CD14-positive monocyte (primary cell): ENCODE measurements at regions of chr14 and their contacts with region 1.

Region 1: GRCh38 chr14:61475316-61475715 is 153.9 kb downstream of the PRKCH start:
- DNase-seq: peak; percentile 73 to 82 (median 79)
- H3K4me3 ChIP-seq: no peak overlapping the region
- H3K4me3 Mint-ChIP-seq: peak overlapping the region in 1 of 2 donors; percentile 48
- H3K27ac ChIP-seq: peak overlapping the region in 1 of 2 donors; percentile 96
- H3K27ac Mint-ChIP-seq: peak overlapping the region; percentile 82 to 99 (median 98)
- H3K4me1 ChIP-seq: peaks cover 95 to 99% of the 10 kb centered on the region in 2 donors
- H3K4me1 Mint-ChIP-seq: peaks cover 95% of the 10 kb centered on the region
- H3K27me3 ChIP-seq: no peaks in the 10 kb centered on the region
- H3K27me3 Mint-ChIP-seq: peaks cover 0 to 3% (median 0%) of the 10 kb centered on the region in 3 donors
- CTCF ChIP-seq: peak; percentile 94

Region 2: DNA sequence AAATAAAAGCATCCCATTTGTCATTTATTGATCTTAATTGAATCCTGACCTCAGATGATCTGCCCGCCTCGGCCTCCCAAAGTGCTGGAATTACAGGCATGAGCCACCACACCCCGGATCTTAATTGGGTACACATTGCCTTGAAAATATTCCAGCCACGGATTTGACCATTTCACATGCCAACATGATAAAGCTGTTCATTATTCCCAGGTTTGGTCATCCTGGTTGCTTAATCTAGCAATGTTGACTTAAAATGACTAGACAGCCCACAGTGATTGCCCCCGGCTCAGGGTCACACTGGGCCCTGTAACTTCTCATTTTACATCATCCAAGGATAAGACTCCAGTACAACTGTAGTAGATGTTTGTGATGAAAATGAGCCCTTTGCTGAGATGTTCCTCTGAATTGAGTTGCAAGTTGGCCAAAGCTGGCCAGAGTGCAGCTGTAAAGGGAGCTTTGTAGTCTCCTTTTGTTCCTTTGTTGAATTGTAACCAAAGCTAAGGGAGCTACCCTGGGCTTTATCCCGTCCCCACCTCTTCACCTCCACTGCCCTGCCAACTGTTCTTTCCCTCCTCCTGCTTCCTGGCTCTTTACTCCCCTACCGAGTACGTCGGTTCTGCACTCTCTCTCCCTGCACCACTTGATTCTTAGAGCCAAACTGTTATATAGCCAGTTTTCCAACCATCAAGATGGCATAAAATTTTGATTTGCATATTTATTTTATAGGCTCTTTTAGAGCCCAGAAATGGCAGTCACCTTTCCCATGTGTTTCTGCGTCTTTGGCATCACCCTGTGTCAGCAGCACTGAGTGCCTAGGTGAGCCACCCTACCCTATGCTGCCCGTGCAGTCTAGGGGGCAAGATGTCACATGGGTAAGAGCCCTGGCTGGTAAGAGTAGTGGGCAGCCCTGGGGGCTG is 78.7 kb after region 1 on chr14:
- intact Hi-C with region 1: loop called in 1 of 2 experiments (anchors 5 kb)
- DNase-seq: peak; percentile 80 to 93 (median 90)
- H3K4me3 ChIP-seq: peak overlapping the region in 1 of 3 experiments; percentile 3
- H3K4me3 Mint-ChIP-seq: peak overlapping the region; percentile 55 to 59
- H3K27ac ChIP-seq: peak overlapping the region; percentile 92 to 94
- H3K27ac Mint-ChIP-seq: peak overlapping the region; percentile 98 to 100 (median 98)
- H3K4me1 ChIP-seq: peaks cover 35 to 47% of the 10 kb centered on the region in 2 donors
- H3K4me1 Mint-ChIP-seq: peaks cover 50% of the 10 kb centered on the region
- H3K27me3 ChIP-seq: no peaks in the 10 kb centered on the region
- H3K27me3 Mint-ChIP-seq: no peaks in the 10 kb centered on the region
- CTCF ChIP-seq: no peak

Region 3: GRCh38 chr14:61598980-61599379 is 123.7 kb after region 1 on chr14:
- intact Hi-C with region 1: loop called (anchors 10 kb)
- DNase-seq: no peak
- H3K4me3 ChIP-seq: no peak overlapping the region
- H3K4me3 Mint-ChIP-seq: no peak overlapping the region
- H3K27ac ChIP-seq: no peak overlapping the region
- H3K27ac Mint-ChIP-seq: peak overlapping the region in 5 of 7 donors; percentile 53 to 89 (median 84)
- H3K4me1 ChIP-seq: peaks cover 43 to 57% of the 10 kb centered on the region in 2 donors
- H3K4me1 Mint-ChIP-seq: peaks cover 51% of the 10 kb centered on the region
- H3K27me3 ChIP-seq: no peaks in the 10 kb centered on the region
- H3K27me3 Mint-ChIP-seq: peaks cover 0 to 2% (median 0%) of the 10 kb centered on the region in 3 donors
- CTCF ChIP-seq: no peak

Region 4: GRCh38 chr14:61726778-61727658 is 251.7 kb after region 1 on chr14:
- intact Hi-C with region 1: loop called in 1 of 2 experiments (anchors 5 kb)
- DNase-seq: peak in 1 of 3 donors; percentile 14
- H3K4me3 ChIP-seq: no peak overlapping the region
- H3K4me3 Mint-ChIP-seq: no peak overlapping the region
- H3K27ac ChIP-seq: no peak overlapping the region
- H3K27ac Mint-ChIP-seq: peak overlapping the region in 3 of 7 donors; percentile 26 to 50 (median 42)
- H3K4me1 ChIP-seq: no peaks in the 10 kb centered on the region
- H3K4me1 Mint-ChIP-seq: peaks cover 10% of the 10 kb centered on the region
- H3K27me3 ChIP-seq: no peaks in the 10 kb centered on the region
- H3K27me3 Mint-ChIP-seq: peaks cover 0 to 2% (median 0%) of the 10 kb centered on the region in 3 donors
- CTCF ChIP-seq: no peak